ENCODE measurements at regions of chr3 and their contacts with region 1.

Region 1: GRCh38 chr3:10322352-10322710 is 1.4 kb upstream of the SEC13 start:
- DNase-seq: peak; percentile 24
- H3K4me3 Mint-ChIP-seq: peak overlapping the region; percentile 30
- H3K27ac Mint-ChIP-seq: no peak overlapping the region
- H3K4me1 Mint-ChIP-seq: peaks cover 30% of the 10 kb centered on the region
- H3K27me3 Mint-ChIP-seq: peaks cover 13% of the 10 kb centered on the region

Region 2: GRCh38 chr3:9362731-9363530 is 959.4 kb before region 1 on chr3 and contains the start of gene THUMPD3:
- intact Hi-C with region 1: loop called (anchors 2 kb)
- DNase-seq: peak; percentile 90
- H3K4me3 Mint-ChIP-seq: peak within 1 kb of the TSS; percentile 96
- H3K27ac Mint-ChIP-seq: peak within 1 kb of the TSS; percentile 98
- H3K4me1 Mint-ChIP-seq: peaks cover 6% of the 10 kb centered on the region
- H3K27me3 Mint-ChIP-seq: peaks cover 2% of the 10 kb centered on the region
- total RNA-seq, gene THUMPD3: 61.4 and 62.4 TPM in 2 replicates

Region 3: DNA sequence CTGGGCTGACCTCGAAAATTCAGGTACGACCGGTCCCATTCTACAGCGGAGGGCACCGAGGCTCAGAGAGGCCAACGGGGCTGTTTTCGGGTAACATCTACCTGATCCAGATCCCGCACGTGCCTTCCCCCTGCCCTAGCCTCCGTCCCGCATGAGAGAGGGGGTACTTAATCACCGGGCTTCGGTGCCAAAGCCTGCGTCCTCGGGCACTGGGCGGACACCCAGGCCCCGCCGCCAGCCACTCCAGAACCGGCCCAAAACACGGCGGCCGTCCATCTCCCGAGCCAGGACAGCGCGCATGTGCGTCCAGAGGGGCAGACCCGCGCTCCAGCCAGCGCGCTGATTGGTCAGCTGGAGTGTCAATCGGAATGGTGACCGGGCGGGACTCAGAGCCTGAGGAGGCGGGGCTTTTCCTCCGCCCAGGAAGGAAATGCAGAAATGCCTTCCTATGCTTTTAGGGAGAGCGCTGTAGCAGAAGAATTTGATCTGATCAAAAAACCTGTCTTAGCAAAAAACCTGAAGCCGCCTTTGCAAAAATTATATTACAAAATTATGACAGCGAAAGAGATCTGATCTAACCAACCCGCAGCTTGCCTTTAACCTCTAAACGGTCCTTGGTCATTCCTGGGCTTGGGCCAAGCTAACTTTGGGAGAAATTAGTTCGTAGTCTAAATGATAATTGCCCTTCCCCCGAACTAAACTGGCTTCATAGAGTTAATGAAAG is 478.5 kb before region 1 on chr3 and contains the start of gene RPUSD3:
- intact Hi-C with region 1: loop called (anchors 2 kb)
- DNase-seq: peak; percentile 95
- H3K4me3 Mint-ChIP-seq: peak within 1 kb of the TSS; percentile 98
- H3K27ac Mint-ChIP-seq: peak within 1 kb of the TSS; percentile 91
- H3K4me1 Mint-ChIP-seq: peaks cover 28% of the 10 kb centered on the region
- H3K27me3 Mint-ChIP-seq: no peaks in the 10 kb centered on the region
- total RNA-seq, gene RPUSD3: 79.2 and 79.5 TPM in 2 replicates

Region 4: DNA sequence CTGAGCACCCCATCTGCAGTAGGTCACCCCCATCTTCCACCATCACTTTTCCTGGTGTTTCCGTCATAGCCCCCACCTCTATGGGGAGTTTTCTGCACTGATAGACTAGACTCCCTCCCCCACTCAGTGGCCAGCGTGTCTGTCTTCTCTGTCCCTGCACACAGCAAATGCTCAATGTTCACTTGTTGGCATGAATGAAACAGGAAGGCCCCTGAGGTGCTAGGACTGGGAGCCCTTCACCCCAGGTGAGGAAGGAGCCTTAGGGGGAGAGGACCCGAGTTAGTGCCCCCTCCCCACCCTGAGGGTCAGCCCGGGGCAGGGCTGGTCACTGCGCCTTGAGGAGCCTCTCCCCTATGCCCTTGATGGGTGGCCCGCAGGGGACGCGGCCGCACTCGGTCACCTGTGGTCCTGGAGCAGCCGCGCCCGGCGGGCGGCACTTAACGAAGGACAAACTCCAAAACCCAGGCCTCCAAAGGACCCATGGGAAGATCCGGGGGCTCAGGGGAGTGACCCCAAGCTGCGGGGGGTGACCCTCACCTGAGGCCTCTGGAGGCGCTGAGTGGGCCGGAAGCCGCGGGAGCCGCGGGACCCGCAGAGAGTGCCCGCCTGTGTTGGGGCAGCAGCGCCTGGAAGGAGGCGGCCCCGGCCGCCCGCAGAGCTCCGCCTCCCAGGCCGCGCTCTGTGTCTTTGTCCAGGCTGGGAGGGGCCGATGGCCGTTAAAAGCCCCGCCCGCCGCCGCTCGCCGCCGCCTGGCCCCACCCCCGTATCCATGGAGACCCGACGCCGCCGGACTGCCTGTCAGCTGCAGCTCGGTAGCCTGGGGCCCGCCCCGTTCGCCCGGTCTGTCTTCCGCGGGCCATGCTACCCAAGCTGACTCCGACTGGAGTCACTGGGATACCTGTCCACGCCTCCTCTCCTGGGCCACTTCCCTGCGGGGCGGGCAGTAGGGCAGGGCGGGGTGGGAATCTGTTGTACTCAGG is 311.6 kb before region 1 on chr3:
- intact Hi-C with region 1: loop called (anchors 5 kb)
- DNase-seq: peak; percentile 85
- H3K4me3 Mint-ChIP-seq: peak overlapping the region; percentile 70
- H3K27ac Mint-ChIP-seq: no peak overlapping the region
- H3K4me1 Mint-ChIP-seq: peaks cover 29% of the 10 kb centered on the region
- H3K27me3 Mint-ChIP-seq: peaks cover 4% of the 10 kb centered on the region

Region 5: DNA sequence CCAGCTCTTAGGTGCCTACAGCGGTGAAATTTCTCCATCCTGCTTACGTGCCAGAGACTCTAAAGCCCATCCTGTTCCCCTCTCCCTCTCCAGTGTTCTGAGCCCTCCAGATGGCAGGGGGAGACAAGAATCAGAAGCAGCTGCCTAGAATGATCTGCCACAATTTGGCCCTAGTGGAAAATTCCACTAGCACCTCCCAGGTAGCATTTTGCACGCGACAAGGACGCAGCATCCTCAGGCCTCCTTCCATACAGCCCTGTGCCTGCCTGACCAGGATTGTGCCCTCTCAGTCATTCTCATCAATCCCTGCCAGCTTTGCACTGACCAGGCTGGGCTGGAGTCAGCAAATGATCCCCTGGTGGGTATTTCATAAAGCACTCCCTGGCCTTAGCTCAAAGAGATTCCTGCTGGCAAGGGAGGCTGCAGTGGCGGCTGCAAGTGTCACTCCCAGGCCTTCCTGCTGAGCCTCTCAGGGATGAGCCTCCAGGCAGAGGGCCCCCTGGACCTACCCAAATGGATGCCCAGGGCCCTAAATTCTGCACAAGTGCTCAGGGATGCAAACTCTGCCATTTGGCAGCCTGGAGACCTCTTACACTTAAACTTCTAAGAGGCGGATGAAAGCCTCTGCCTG is 313.2 kb after region 1 on chr3:
- intact Hi-C with region 1: no loop called
- DNase-seq: no peak
- H3K4me3 Mint-ChIP-seq: no peak overlapping the region
- H3K27ac Mint-ChIP-seq: no peak overlapping the region
- H3K4me1 Mint-ChIP-seq: no peaks in the 10 kb centered on the region
- H3K27me3 Mint-ChIP-seq: no peaks in the 10 kb centered on the region

Measured in activated T-helper 1 cell treated with anti-CD3 and anti-CD28 coated beads, Interleukin-12 subunit alpha, Interleukin-12 subunit beta, Interleukin-2, Interleukin-4 antibody, amounts not matched to agents 30 ng/mL and 10 ng/mL and 1 ng/mL, durations not matched to agents 14 hours and 24 hours and 36 hours (primary cell).